Motor neuron (in vitro differentiated cells): ENCODE measurements at regions of chr9 and their contacts with region 1.

Region 1: DNA sequence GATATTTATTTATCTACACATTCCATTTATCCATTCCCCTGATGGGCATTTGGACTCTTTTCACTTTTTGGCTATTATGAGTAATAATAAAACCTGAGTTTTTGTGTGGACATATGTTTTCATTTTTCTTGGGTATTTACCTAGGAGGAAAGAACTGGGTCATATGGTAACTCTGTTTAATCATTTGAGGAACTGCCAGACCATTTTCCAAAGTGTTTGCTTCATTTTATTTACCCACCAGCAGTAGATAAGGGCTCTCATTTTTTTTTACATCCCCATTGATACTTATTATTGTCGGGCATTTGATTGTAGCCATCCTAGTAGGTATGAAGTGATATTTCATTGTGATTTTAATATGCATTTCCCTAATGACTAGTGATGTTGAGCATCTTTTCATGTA is 7.7 kb upstream of the PTPDC1 start:
- ATAC-seq: no peak
- H3K4me3 ChIP-seq: no peak overlapping the region
- H3K27ac ChIP-seq: no peak overlapping the region
- H3K4me1 ChIP-seq: no peaks in the 10 kb centered on the region

Region 2: GRCh38 chr9:93826209-93826608 is 250.3 kb before region 1 on chr9:
- in situ Hi-C with region 1: no loop called
- ATAC-seq: no peak
- H3K4me3 ChIP-seq: no peak overlapping the region
- H3K27ac ChIP-seq: no peak overlapping the region
- H3K4me1 ChIP-seq: peaks cover 2 to 13% of the 10 kb centered on the region in 2 donors

Region 3: GRCh38 chr9:94199776-94200175 is 123.2 kb after region 1 on chr9:
- in situ Hi-C with region 1: loop called in 1 of 9 experiments (anchors 10 kb)
- ATAC-seq: no peak
- H3K4me3 ChIP-seq: no peak overlapping the region
- H3K27ac ChIP-seq: no peak overlapping the region
- H3K4me1 ChIP-seq: no peaks in the 10 kb centered on the region

Region 4: GRCh38 chr9:94443032-94443722 is 366.6 kb after region 1 on chr9:
- in situ Hi-C with region 1: no loop called
- ATAC-seq: no peak
- H3K4me3 ChIP-seq: no peak overlapping the region
- H3K27ac ChIP-seq: no peak overlapping the region
- H3K4me1 ChIP-seq: no peaks in the 10 kb centered on the region